ENCODE measurements at regions of chr17 and their contacts with region 1.

Region 1: GRCh38 chr17:82212331-82213250 is at the start of gene CCDC57:
- DNase-seq: peak; percentile 90 to 93 (median 92)
- ATAC-seq: peak; percentile 87
- H3K4me3 ChIP-seq: peak within 1 kb of the TSS; percentile 94
- H3K27ac ChIP-seq: peak within 1 kb of the TSS; percentile 95
- H3K4me1 ChIP-seq: peaks cover 44 to 50% of the 10 kb centered on the region in 2 experiments
- H3K27me3 ChIP-seq: no peaks in the 10 kb centered on the region
- CTCF ChIP-seq: no peak
- EP300 ChIP-seq: peak; percentile 19; the same call in 1 of the 2 replicates
- POLR2A ChIP-seq: peak; percentile 73
- RAD21 ChIP-seq: no peak
- polyA plus RNA-seq, gene CCDC57: 0.83 to 1.1 TPM

Region 2: DNA sequence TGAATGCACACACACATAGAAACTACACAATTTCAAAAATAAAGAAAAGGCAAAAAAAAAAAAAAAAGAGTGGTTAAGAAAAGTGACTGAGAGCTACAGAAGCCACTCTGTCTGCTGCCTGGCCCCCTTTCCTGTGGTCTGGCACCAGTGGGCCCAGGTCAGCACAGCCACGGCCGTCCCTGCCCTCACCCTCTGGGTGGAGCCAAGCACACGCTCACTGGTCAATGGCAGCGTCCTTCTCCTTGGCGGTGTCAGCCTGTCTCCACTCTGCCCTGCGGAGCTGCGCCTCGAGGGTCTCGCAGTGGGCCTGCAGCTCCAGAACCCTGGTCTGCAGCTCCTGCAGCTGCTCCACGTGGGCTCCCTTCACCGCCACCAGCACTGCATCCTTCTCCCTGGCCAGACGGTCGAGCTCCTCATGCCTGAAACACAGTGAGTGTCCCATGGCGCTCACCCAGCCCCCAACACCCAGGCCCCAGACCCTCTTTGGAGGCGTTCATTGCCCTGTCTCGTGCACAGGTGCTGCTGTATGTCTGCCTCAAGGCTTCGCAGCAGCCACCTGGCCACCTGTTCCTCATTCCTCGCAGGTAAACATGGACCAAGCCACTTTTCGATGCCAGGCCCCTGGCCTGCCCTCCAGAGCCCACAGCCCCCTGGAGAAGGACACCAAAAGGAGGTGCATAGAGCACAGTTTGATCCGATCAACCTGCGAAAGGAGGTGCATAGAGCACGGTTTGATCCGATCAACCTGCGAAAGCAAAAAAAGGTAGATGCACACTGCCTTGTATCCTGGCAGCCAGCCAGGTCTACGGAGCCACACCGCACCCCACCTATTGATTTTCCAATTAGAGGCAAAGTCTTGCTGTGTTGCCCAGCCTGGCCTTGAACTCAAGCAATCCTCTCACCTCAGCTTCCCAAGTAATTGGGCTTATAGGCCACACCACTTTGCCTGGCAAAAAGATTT is 24.3 kb before region 1 on chr17:
- CTCF ChIA-PET with region 1: no interaction called
- POLR2A ChIA-PET with region 1: no interaction called
- in situ Hi-C with region 1: no loop called
- intact Hi-C with region 1: no loop called
- DNase-seq: no peak
- ATAC-seq: no peak
- H3K4me3 ChIP-seq: no peak overlapping the region
- H3K27ac ChIP-seq: no peak overlapping the region
- H3K4me1 ChIP-seq: peaks cover 0 to 6% of the 10 kb centered on the region in 2 experiments; a peak in 2 of 5 replicates
- H3K27me3 ChIP-seq: no peaks in the 10 kb centered on the region
- CTCF ChIP-seq: no peak
- EP300 ChIP-seq: no peak
- POLR2A ChIP-seq: 0 out of 2 replicates have a peak, but pooled peaks have one; percentile 22
- RAD21 ChIP-seq: no peak

Region 3: GRCh38 chr17:82200743-82201497 is 11.7 kb before region 1 on chr17:
- CTCF ChIA-PET with region 1: interaction called, 4 read pairs
- POLR2A ChIA-PET with region 1: interaction called, 11 read pairs
- in situ Hi-C with region 1: no loop called
- intact Hi-C with region 1: no loop called
- DNase-seq: peak; percentile 46 to 88 (median 62)
- ATAC-seq: peak; percentile 92
- H3K4me3 ChIP-seq: no peak overlapping the region
- H3K27ac ChIP-seq: peak overlapping the region; percentile 80
- H3K4me1 ChIP-seq: peaks cover 45 to 57% of the 10 kb centered on the region in 2 experiments
- H3K27me3 ChIP-seq: no peaks in the 10 kb centered on the region
- CTCF ChIP-seq: no peak
- EP300 ChIP-seq: peak; percentile 84; the same call in 1 of the 2 replicates
- POLR2A ChIP-seq: peak; percentile 65
- RAD21 ChIP-seq: 0 out of 4 replicates have a peak, but pooled peaks of 1 of the 2 experiments have one; percentile 4